Activated CD8-positive, alpha-beta T cell treated with anti-CD3 and anti-CD28 coated beads for 36 hours (primary cell): ENCODE measurements at regions of chr9 and their contacts with region 1.

Region 1: GRCh38 chr9:7067169-7067568 is 309.4 kb downstream of the KDM4C start:
- DNase-seq: no peak
- ATAC-seq: no peak
- H3K4me3 Mint-ChIP-seq: no peak overlapping the region
- H3K27ac Mint-ChIP-seq: no peak overlapping the region
- H3K4me1 Mint-ChIP-seq: peaks cover 1% of the 10 kb centered on the region
- H3K27me3 Mint-ChIP-seq: no peaks in the 10 kb centered on the region
- CTCF ChIP-seq: no peak

Region 2: GRCh38 chr9:7055201-7055903 is 11.8 kb before region 1 on chr9:
- CTCF ChIA-PET with region 1: interaction called, 12 read pairs
- POLR2A ChIA-PET with region 1: no interaction called
- intact Hi-C with region 1: no loop called
- DNase-seq: no peak
- ATAC-seq: no peak
- H3K4me3 Mint-ChIP-seq: no peak overlapping the region
- H3K27ac Mint-ChIP-seq: no peak overlapping the region
- H3K4me1 Mint-ChIP-seq: peaks cover 8% of the 10 kb centered on the region
- H3K27me3 Mint-ChIP-seq: no peaks in the 10 kb centered on the region
- CTCF ChIP-seq: no peak